ENCODE measurements at regions of chr10 and their contacts with region 1.

Region 1: DNA sequence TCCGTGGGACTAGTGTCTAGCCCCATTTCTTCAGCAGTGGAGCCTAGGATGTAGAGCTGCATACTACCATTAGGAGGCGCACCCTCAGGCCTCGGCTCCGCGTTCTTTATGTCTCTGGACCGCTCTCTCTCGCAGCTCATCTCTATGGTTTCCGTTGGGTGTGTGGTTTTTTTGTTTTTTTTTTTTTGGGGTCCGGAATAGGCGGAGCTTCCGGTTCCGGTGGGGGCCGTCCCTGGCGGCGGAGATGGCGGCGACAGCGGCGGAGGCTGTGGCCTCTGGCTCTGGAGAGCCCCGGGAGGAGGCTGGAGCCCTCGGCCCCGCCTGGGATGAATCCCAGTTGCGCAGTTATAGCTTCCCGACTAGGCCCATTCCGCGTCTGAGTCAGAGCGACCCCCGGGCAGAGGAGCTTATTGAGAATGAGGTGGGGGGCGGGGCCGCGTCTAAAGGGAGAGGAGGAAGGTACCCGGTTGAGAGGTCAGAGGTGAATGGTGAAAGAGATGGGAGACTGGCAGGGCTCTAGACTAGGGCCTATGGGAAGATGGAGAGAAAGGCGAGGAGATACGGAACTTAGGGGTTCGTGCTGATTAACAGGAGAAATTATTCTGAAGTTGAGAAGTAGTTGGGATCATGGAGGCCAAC is at the start of gene HIF1AN:
- DNase-seq: peak; percentile 70 to 95 (median 91)
- ATAC-seq: peak; percentile 100
- H3K4me3 ChIP-seq: peak within 1 kb of the TSS; percentile 73
- H3K4me3 Mint-ChIP-seq: peak within 1 kb of the TSS in 1 of 10 donors; percentile 9
- H3K27ac ChIP-seq: peak within 1 kb of the TSS; percentile 85
- H3K27ac Mint-ChIP-seq: peak within 1 kb of the TSS in 1 of 9 donors; percentile 57
- H3K4me1 ChIP-seq: peaks cover 24 to 27% of the 10 kb centered on the region in 2 donors
- H3K4me1 Mint-ChIP-seq: peaks cover 0 to 29% (median 10%) of the 10 kb centered on the region in 7 donors
- H3K27me3 ChIP-seq: no peaks in the 10 kb centered on the region
- H3K27me3 Mint-ChIP-seq: no peaks in the 10 kb centered on the region
- total RNA-seq, gene HIF1AN: 43.3 to 74.9 (median 54.8) TPM

Region 2: DNA sequence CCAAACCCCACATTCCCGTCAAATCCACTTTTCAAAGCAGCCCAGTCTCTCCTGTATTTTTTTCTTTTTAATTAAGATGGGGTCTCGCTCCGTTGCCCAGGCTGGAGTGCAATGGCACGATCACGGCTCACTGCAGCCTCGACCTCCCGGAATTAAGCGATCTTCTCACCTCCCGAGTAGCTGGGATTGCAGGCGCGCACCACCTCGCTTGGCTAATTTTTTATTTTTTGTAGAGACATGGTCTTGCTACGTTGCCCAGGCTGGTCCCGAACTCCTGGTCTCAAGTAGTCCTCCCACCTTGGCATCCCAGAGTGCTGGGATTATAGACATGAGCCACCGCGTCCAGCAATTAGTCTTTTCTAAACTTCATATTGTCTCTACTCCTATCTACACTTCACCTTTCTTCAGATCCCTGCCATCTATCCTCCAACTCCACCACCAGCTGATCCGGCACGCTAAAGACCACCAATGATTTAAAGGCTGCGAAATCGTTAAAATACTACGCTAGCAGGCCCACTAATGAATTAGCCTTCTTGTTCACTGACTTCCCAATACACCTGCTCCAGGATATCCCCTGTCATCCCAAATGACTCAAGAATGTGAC is 305.9 kb before region 1 on chr10:
- CTCF ChIA-PET with region 1: no interaction called
- POLR2A ChIA-PET with region 1: no interaction called
- intact Hi-C with region 1: loop called in 1 of 2 experiments (anchors 1 kb)
- DNase-seq: no peak
- ATAC-seq: no peak
- H3K4me3 ChIP-seq: peak overlapping the region; percentile 99
- H3K4me3 Mint-ChIP-seq: peak overlapping the region; percentile 85 to 98 (median 91)
- H3K27ac ChIP-seq: peak overlapping the region; percentile 83
- H3K27ac Mint-ChIP-seq: peak overlapping the region; percentile 75 to 97 (median 85)
- H3K4me1 ChIP-seq: peaks cover 0 to 8% of the 10 kb centered on the region in 2 donors
- H3K4me1 Mint-ChIP-seq: peaks cover 16 to 44% (median 36%) of the 10 kb centered on the region in 7 donors
- H3K27me3 ChIP-seq: no peaks in the 10 kb centered on the region
- H3K27me3 Mint-ChIP-seq: no peaks in the 10 kb centered on the region

Region 3: GRCh38 chr10:100481462-100482081 is 54.3 kb before region 1 on chr10:
- CTCF ChIA-PET with region 1: interaction called, 3 read pairs
- POLR2A ChIA-PET with region 1: no interaction called
- intact Hi-C with region 1: loop called in 1 of 2 experiments (anchors 1 kb)
- DNase-seq: peak; percentile 86 to 97 (median 90)
- ATAC-seq: peak; percentile 98
- H3K4me3 ChIP-seq: peak overlapping the region; percentile 70
- H3K4me3 Mint-ChIP-seq: peak overlapping the region; percentile 63 to 92 (median 86)
- H3K27ac ChIP-seq: no peak overlapping the region
- H3K27ac Mint-ChIP-seq: peak overlapping the region in 5 of 9 donors; percentile 1 to 76 (median 66)
- H3K4me1 ChIP-seq: peaks cover 0 to 4% of the 10 kb centered on the region in 2 donors
- H3K4me1 Mint-ChIP-seq: peaks cover 10 to 35% (median 12%) of the 10 kb centered on the region in 7 donors
- H3K27me3 ChIP-seq: no peaks in the 10 kb centered on the region
- H3K27me3 Mint-ChIP-seq: peaks cover 4 to 31% (median 26%) of the 10 kb centered on the region in 5 donors

Region 4: DNA sequence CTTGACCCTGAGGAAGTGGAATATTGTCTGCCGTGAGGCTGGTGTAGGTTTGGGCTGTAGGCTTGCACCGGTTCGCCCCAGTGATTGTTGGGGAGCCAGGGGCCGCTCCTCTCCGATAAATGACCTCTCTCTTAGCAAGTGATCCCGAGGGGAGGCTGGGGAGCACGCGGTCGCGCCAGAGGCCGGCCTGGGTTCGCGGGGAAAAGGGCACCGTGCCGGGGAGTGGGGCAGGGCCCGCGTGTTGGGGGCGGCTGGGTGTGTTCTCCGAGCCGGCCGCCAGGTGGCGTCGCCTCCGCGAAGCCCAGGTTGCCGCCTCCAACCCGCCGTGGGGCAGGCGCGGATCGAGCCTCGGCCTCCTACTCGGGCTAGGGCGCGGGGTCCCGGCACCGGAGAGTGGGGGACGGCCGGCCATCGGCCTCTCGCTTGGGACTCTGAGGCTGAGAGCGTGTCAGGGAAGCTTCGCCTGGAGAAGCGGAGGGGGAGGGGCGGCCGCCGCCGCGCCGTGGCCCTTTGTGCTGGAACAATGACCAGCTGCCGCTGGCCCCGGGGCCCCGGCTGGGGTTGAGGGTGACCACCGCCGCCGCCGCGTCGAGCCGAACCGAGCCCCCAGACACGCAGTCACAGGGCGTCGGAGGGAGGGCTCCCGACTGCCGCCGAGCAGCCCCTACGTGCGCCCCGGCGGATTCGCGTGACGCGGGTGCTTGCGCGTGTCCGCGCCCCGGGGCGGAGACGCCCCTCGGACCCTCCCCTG is 463.3 kb after region 1 on chr10:
- CTCF ChIA-PET with region 1: no interaction called
- POLR2A ChIA-PET with region 1: interaction called, 3 read pairs
- intact Hi-C with region 1: loop called (anchors 1 kb)
- DNase-seq: peak; percentile 69 to 90 (median 82)
- ATAC-seq: peak; percentile 82
- H3K4me3 ChIP-seq: peak overlapping the region; percentile 87
- H3K4me3 Mint-ChIP-seq: peak overlapping the region; percentile 87 to 98 (median 92)
- H3K27ac ChIP-seq: peak overlapping the region; percentile 99
- H3K27ac Mint-ChIP-seq: peak overlapping the region; percentile 88 to 99 (median 94)
- H3K4me1 ChIP-seq: peaks cover 20 to 22% of the 10 kb centered on the region in 2 donors
- H3K4me1 Mint-ChIP-seq: peaks cover 15 to 37% (median 23%) of the 10 kb centered on the region in 7 donors
- H3K27me3 ChIP-seq: no peaks in the 10 kb centered on the region
- H3K27me3 Mint-ChIP-seq: no peaks in the 10 kb centered on the region

Region 5: DNA sequence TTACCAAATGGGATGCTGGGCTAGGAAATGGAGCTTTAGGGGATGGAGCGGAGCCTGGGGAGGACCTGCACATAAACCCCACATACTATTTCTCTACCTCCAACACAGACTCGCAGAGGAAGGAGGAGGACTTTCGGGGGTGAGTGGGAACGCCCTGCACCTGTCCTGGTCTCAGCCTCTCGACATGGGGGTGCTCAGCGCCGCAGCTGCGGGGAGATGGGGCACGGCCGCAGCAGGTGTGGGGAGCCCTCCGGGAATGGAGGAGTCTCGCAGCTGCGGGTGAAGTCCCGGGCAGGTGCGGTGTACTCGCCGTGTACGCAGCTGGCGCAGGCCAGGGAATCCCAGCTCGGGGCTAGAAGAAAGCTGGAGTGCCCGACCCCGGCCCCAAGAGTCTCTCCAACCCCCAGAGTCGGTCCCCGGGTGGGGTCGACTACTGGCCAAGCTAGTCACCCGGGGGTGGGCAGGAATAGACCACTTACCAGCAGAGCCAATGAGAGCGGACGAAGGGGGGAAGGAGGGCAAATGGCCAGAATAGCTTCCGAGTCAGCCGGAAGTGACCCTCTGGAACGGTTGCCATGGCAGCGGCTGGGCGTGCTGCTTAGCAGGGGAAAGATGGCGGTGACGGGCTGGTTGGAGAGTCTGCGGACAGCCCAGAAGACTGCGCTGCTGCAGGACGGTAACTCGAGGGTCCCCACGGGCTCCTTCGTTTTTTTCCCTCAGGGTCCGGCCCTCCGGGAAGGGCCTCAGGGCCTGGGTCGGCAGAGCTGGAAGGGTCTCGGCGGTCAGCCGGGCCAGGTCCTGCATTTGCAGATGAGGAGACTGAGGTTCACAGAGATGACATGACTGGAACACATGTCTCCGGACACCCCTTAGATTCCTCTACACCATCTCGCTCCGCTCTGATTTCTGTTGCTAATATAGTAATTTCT is 1052.2 kb after region 1 on chr10 and contains the starts of genes DPCD and POLL:
- CTCF ChIA-PET with region 1: no interaction called
- POLR2A ChIA-PET with region 1: no interaction called
- intact Hi-C with region 1: loop called in 1 of 2 experiments (anchors 5 kb)
- DNase-seq: peak; percentile 73 to 89 (median 81)
- ATAC-seq: peak; percentile 94
- H3K4me3 ChIP-seq: peak within 1 kb of the TSS; percentile 77
- H3K4me3 Mint-ChIP-seq: peak within 1 kb of the TSS; percentile 92 to 97 (median 95)
- H3K27ac ChIP-seq: peak within 1 kb of the TSS; percentile 69
- H3K27ac Mint-ChIP-seq: peak within 1 kb of the TSS; percentile 71 to 94 (median 89)
- H3K4me1 ChIP-seq: peaks cover 14 to 16% of the 10 kb centered on the region in 2 donors
- H3K4me1 Mint-ChIP-seq: peaks cover 16 to 37% (median 32%) of the 10 kb centered on the region in 7 donors
- H3K27me3 ChIP-seq: no peaks in the 10 kb centered on the region
- H3K27me3 Mint-ChIP-seq: no peaks in the 10 kb centered on the region
- total RNA-seq, gene DPCD: 0.64 to 3.6 (median 1.3) TPM
- total RNA-seq, gene POLL: 34.9 to 65.8 (median 38.8) TPM